Common myeloid progenitor, CD34-positive (primary cell): ENCODE measurements at regions of chr11 and their contacts with region 1.

Region 1: GRCh38 chr11:102927624-102927990 is 27.9 kb downstream of the MMP13 start:
- DNase-seq: no peak
- H3K4me3 ChIP-seq: no peak overlapping the region
- H3K27ac ChIP-seq: no peak overlapping the region
- H3K4me1 ChIP-seq: peaks cover 0 to 14% (median 5%) of the 10 kb centered on the region in 4 experiments
- H3K27me3 ChIP-seq: peaks cover 0 to 22% (median 6%) of the 10 kb centered on the region in 5 experiments

Region 2: DNA sequence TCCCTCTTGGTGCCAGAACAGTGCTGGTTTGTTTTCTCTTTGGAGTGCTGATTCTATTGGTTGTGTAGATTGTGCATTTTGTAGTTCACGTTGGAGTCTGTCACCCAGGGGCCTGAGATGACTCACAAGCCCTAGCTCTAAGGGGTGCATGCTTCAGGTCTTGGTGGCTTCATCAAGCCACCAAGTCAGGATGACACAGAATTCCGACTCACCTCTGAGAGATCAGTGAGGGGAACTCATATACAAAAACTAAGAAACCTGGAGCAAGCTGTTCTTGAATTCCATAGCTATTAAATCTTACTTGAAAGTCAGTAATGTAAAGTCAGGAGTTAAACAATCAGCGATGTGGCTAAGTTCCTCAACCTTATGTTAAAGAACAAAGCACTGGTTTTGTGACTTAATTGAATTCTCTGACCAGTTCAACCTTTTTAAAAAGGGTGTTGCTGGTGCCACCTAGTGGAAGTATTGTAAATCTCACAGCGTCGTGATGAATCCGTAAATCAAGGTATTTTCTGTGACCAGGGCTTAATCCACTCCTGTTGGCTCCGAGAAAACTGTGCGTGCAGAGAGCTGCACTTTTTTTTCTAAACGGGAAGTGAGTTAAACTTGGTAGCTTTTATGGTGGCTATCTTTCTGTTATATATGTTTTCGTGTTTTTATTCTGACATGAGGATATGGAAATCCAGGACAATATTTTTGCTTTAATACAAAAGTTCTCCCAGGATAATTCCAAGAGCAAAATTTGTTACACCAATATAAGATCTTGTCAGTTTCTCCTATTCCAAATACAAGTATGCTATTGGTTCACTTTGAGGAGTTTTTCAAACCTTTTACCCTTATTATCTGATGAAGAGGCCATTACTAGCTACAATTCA is 13.3 kb after region 1 on chr11:
- CTCF ChIA-PET with region 1: interaction called, 17 read pairs
- POLR2A ChIA-PET with region 1: no interaction called
- DNase-seq: peak; percentile 77 to 89 (median 84)
- H3K4me3 ChIP-seq: no peak overlapping the region
- H3K27ac ChIP-seq: no peak overlapping the region
- H3K4me1 ChIP-seq: peaks cover 0 to 2% (median 0%) of the 10 kb centered on the region in 4 experiments
- H3K27me3 ChIP-seq: peaks cover 0 to 3% (median 0%) of the 10 kb centered on the region in 5 experiments